Dorsolateral prefrontal cortex (tissue), 120 donors: ENCODE measurements at regions of chr1 and their contacts with region 1.

Region 1: DNA sequence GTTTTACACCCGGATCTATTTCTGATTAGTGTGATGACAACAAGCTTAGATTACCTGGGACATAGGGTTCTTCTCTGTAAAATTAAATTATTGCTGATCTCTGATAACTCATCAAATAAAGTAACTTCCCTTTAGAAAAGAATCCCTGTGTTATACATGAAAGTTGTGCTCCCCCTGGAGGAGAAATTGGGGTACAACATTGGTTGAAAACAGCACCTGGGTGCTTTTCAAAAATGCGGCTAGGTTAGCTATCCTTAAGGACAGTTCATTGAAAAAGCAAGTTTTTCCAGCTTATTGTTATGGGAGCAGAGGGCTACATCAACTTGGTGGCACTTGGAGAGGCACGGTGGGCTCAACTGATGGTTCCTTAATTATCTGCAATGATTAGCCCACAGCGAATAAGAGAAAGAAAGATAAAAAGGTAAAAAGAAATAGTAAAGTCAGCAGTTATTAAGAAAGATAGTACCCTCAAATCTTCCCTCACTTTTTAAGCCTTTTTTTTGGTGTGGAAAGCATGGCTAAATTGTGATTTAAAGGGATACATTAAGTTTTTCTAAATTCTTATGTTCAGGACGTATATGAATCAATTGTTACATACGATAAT is 97.8 kb downstream of the FMN2 start:
- DNase-seq: peak in 2 of 10 donors; percentile 37 to 41
- H3K4me3 ChIP-seq: no peak overlapping the region
- H3K27ac ChIP-seq: peak overlapping the region in 3 of 59 donors; percentile 21 to 51 (median 23)
- H3K27me3 ChIP-seq: no peaks in the 10 kb centered on the region
- CTCF ChIP-seq: peak; percentile 66 to 86 (median 79)

Region 2: GRCh38 chr1:240014051-240014450 is 175.4 kb before region 1 on chr1:
- intact Hi-C with region 1: no loop called
- DNase-seq: no peak
- H3K4me3 ChIP-seq: no peak overlapping the region
- H3K27ac ChIP-seq: no peak overlapping the region
- H3K27me3 ChIP-seq: peaks cover 0 to 3% (median 0%) of the 10 kb centered on the region in 45 donors
- CTCF ChIP-seq: no peak

Region 3: GRCh38 chr1:240027059-240027462 is 162.4 kb before region 1 on chr1:
- intact Hi-C with region 1: loop called (anchors 10 kb)
- DNase-seq: peak in 9 of 10 donors; percentile 30 to 73 (median 53)
- H3K4me3 ChIP-seq: peak overlapping the region in 1 of 59 donors; percentile 1
- H3K27ac ChIP-seq: no peak overlapping the region
- H3K27me3 ChIP-seq: no peaks in the 10 kb centered on the region
- CTCF ChIP-seq: peak; percentile 64 to 99 (median 90)

Region 4: DNA sequence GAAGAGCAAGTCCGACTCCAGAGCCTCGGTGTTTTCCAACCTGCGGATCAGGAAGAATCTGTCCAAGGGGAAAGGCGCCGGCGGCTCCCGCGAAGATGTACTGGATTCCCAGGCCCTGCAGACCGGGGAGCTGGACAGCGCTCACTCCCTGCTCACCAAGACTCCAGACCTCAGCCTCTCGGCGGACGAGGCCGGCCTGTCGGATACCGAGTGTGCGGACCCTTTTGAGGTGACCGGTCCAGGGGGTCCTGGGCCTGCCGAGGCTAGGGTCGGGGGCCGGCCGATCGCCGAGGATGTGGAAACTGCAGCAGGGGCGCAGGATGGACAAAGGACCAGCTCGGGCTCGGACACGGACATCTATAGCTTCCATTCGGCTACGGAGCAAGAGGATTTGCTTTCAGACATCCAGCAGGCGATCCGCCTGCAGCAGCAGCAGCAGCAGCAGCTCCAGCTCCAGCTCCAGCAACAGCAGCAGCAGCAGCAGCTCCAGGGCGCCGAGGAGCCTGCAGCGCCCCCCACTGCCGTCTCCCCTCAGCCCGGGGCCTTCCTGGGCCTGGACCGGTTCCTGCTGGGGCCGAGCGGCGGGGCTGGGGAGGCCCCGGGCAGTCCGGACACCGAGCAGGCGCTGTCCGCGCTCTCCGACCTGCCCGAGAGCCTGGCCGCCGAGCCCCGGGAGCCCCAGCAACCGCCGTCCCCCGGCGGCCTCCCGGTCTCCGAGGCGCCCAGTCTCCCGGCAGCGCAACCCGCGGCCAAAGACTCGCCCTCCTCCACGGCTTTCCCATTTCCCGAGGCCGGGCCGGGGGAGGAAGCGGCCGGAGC is 97.0 kb before region 1 on chr1:
- intact Hi-C with region 1: loop called (anchors 5 kb)
- DNase-seq: peak in 8 of 10 donors; percentile 14 to 73 (median 42)
- H3K4me3 ChIP-seq: peak overlapping the region; percentile 37 to 88 (median 76)
- H3K27ac ChIP-seq: peak overlapping the region in 58 of 59 donors; percentile 2 to 95 (median 87)
- H3K27me3 ChIP-seq: peaks cover 0 to 13% (median 0%) of the 10 kb centered on the region in 45 donors
- CTCF ChIP-seq: peak in 41 of 56 donors; percentile 12 to 51 (median 28)

Region 5: DNA sequence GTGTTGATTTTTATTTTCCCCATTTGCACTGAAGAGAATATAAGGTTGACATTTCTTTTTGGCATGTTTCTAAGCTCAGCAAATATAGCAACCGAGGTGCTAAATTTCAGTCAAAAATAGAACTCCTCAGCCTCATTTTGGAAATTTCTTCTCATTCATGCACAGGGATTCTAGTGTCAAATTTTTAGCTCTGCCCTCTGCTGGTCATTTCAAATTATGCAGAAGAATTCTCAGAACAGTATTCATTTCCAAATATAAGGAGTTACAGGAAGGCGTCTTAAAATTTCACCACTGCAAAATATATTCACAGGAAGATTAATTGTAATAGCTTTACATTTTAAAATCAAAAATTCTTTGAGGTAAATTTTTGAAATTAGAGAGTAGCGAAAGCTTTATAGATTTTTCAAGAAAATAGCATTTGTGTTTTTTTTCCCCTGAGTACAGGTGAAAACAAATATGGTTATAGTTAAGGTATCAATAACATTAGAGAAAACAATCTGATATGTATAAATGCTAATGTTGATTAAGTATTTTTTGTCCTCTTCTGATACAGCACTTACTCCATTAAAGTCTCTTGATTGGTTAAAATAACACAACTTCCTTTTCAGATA is 39.9 kb before region 1 on chr1:
- intact Hi-C with region 1: no loop called
- DNase-seq: peak in 1 of 10 donors; percentile 12
- H3K4me3 ChIP-seq: no peak overlapping the region
- H3K27ac ChIP-seq: peak overlapping the region in 2 of 59 donors; percentile 5 to 6
- H3K27me3 ChIP-seq: no peaks in the 10 kb centered on the region
- CTCF ChIP-seq: peak; percentile 63 to 96 (median 78)

Region 6: DNA sequence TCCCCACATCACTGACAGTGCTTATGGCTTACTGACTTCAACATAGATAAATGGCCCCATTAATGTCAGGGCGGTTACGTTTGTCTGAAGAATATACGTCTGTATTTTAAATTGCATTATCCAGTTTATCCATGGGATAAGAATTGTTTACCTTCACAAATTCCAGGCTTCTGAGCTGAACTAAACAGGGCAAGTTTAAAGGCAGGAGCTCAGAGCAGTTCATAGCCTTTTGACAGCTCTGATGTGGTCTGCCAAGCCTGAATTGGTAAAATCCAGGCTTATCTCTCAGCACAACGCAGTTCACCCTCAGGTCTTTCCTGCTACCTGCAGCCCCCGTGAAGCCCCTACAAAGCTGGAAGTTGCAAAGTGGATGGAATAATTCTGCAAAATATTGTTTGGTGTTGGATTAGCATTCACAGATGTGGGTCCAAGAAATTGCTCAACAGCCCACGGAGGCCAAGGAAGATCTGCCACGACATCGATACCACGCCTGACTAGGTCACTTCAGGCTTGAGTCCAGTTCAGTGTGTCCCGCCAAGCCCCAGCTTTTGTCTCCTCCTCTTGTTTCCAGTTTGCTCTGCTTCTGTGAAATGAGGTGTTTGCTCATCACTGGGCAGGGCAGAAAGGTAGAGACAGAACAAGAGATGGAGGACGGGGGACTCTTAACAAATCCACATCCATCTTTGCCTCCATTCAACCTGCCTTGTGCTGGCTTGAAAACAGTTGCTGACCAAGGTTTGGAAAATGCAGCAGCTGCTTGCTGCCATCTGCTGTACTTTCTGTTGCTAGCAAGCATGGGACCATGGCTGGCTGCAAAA is 502.2 kb after region 1 on chr1:
- intact Hi-C with region 1: loop called (anchors 2 to 5 kb)
- DNase-seq: peak in 8 of 10 donors; percentile 28 to 62 (median 54)
- H3K4me3 ChIP-seq: peak overlapping the region in 14 of 59 donors; percentile 2 to 48 (median 20)
- H3K27ac ChIP-seq: no peak overlapping the region
- H3K27me3 ChIP-seq: no peaks in the 10 kb centered on the region
- CTCF ChIP-seq: peak in 54 of 56 donors; percentile 28 to 75 (median 58)